Activated CD8-positive, alpha-beta T cell treated with anti-CD3 and anti-CD28 coated beads, Interleukin-2, amount 10 ng/mL, durations not matched to agents 7 days and 5 days (primary cell): ENCODE measurements at regions of chr7 and their contacts with region 1.

Region 1: GRCh38 chr7:111098011-111098925 is 7.3 kb downstream of the LRRN3 start:
- DNase-seq: peak; percentile 80
- ATAC-seq: peak; percentile 77
- H3K4me3 Mint-ChIP-seq: peak overlapping the region; percentile 95
- H3K27ac Mint-ChIP-seq: peak overlapping the region; percentile 65
- H3K4me1 Mint-ChIP-seq: peaks cover 53% of the 10 kb centered on the region
- H3K27me3 Mint-ChIP-seq: no peaks in the 10 kb centered on the region

Region 2: DNA sequence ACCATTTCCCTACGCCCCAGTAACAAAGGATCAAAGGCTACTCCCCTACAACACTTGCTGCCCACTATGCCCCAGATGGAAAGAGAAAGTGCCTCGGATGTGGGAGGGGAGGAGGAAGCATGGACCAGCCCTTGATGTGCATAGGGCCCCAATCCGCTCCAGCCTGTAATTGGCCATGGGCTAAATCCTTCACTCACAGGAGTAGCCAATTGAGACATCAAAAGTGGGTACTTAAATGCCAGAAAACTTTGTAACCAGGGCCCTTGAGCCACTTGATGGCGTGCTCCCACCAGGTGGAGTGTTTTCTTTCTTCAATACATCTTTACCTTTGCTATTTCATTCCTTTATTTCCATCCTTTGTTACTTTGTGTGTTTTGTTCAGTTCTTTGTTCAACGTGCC is 507.9 kb before region 1 on chr7:
- CTCF ChIA-PET with region 1: interaction called, 14 read pairs
- POLR2A ChIA-PET with region 1: no interaction called
- DNase-seq: peak; percentile 31
- ATAC-seq: no peak
- H3K4me3 Mint-ChIP-seq: no peak overlapping the region
- H3K27ac Mint-ChIP-seq: no peak overlapping the region
- H3K4me1 Mint-ChIP-seq: no peaks in the 10 kb centered on the region
- H3K27me3 Mint-ChIP-seq: no peaks in the 10 kb centered on the region

Region 3: DNA sequence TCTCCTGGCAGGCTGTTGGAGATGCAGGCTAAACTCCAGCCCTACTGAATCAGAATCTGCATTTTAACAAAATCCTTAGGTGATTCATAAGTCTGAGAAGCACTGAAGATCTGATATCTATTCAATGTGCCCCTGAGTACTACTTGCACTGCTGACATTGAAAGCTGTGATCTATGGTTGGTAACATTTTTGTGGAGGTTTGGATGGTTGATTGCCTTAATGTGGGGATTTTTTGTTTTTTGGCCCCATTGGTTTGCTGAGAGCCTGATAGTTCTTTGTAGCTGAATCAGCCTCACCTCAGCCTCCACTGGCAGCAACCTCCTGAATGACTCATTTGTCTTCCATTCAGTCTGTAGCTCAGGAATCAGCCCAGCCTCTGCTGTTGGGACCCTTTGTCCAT is 22.1 kb before region 1 on chr7:
- CTCF ChIA-PET with region 1: interaction called, 19 read pairs
- POLR2A ChIA-PET with region 1: interaction called, 106 read pairs
- DNase-seq: peak; percentile 54
- ATAC-seq: peak; percentile 61
- H3K4me3 Mint-ChIP-seq: no peak overlapping the region
- H3K27ac Mint-ChIP-seq: peak overlapping the region; percentile 53
- H3K4me1 Mint-ChIP-seq: peaks cover 73% of the 10 kb centered on the region
- H3K27me3 Mint-ChIP-seq: no peaks in the 10 kb centered on the region

Region 4: GRCh38 chr7:111083413-111083812 is 14.9 kb before region 1 on chr7:
- CTCF ChIA-PET with region 1: interaction called, 15 read pairs
- POLR2A ChIA-PET with region 1: interaction called, 106 read pairs
- DNase-seq: peak; percentile 86
- ATAC-seq: peak; percentile 88
- H3K4me3 Mint-ChIP-seq: peak overlapping the region; percentile 69
- H3K27ac Mint-ChIP-seq: peak overlapping the region; percentile 93
- H3K4me1 Mint-ChIP-seq: peaks cover 76% of the 10 kb centered on the region
- H3K27me3 Mint-ChIP-seq: no peaks in the 10 kb centered on the region

Region 5: DNA sequence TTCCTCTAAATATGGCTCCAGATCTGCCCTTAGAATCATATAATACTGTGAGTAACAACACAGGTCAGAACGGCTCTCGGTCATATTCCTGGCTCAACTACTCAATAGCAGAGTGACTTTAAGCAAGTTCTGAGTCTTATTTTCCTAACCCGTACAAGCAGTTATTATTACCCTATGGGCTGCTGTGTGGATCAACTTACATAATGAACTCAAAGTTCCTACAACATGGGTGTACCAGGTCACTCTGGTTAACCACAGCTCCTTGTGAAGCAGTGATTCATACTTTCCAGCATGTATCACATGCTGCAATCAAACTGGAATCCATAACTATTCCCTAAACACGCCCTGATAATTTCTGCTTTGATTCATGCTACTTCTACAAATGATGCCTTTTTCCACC is 100.0 kb after region 1 on chr7:
- CTCF ChIA-PET with region 1: no interaction called
- POLR2A ChIA-PET with region 1: no interaction called
- DNase-seq: no peak
- ATAC-seq: no peak
- H3K4me3 Mint-ChIP-seq: no peak overlapping the region
- H3K27ac Mint-ChIP-seq: no peak overlapping the region
- H3K4me1 Mint-ChIP-seq: no peaks in the 10 kb centered on the region
- H3K27me3 Mint-ChIP-seq: no peaks in the 10 kb centered on the region